Common myeloid progenitor, CD34-positive (primary cell): ENCODE measurements at regions of chr14 and their contacts with region 1.

Region 1: DNA sequence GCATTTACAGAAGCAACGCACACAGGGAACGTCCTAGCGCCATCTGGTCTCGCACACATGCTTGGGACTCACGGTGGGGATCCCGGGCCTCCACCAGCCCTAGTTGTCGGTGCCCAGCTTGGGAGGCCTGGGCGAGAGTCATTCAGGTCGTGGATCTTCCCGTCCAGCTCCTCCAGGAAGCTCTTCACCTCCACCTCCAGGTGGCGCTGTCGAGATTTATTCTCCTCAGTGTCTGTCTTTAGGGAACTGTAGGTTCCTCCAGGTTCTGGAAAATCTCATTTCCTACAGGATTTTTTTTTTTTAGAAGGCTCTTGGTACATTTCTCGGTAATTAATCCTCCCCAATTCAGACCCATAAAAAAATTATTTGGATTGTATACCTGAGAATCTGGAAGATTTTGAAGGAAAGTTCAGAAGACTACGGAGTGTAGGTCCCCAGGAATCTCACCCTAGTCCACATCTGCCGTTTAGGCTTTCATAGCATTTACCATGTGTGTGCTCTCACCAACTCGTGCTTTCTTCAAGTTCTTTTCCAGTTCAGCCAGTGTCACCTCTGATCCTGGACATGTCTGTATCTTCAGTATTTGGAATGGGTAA is 910.0 kb downstream of the TMEM121 start:
- DNase-seq: peak; percentile 31 to 64 (median 60)
- H3K4me3 ChIP-seq: no peak overlapping the region
- H3K27ac ChIP-seq: no peak overlapping the region
- H3K4me1 ChIP-seq: peaks cover 0 to 15% (median 5%) of the 10 kb centered on the region in 4 experiments
- H3K27me3 ChIP-seq: no peaks in the 10 kb centered on the region

Region 2: GRCh38 chr14:106459971-106460730 is 23.7 kb after region 1 on chr14:
- CTCF ChIA-PET with region 1: interaction called, 10 read pairs
- POLR2A ChIA-PET with region 1: no interaction called
- DNase-seq: no peak
- H3K4me3 ChIP-seq: no peak overlapping the region
- H3K27ac ChIP-seq: no peak overlapping the region
- H3K4me1 ChIP-seq: peaks cover 0 to 9% (median 3%) of the 10 kb centered on the region in 4 experiments
- H3K27me3 ChIP-seq: no peaks in the 10 kb centered on the region

Region 3: DNA sequence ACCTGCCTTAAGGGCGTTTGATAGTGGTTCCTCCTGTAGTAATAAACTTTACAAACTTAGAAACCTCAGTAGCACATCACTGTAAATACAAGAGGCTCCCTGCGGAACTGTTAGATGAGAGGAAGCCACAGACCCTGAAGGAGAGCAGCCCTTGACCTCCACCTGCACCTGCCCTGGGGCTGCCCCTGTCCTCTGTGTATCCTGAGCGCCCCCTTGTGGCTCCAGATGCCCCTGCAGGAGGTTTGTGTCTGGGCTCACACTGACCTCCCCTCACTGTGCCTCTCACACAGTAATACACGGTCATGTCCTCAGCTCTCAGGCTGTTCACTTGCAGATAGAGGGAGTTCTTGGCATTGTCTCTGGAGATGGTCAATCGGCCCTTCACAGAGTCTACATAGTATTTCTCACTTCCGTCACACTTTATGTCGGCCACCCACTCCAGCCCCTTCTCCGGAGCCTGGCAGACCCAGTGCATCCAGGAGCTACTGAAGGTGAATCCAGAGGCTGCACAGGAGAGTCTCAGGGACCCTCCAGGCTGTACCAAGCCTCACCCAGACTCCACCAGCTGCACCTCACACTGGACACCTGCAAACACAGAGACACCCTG is 149.8 kb after region 1 on chr14:
- CTCF ChIA-PET with region 1: no interaction called
- POLR2A ChIA-PET with region 1: no interaction called
- DNase-seq: peak; percentile 35 to 63 (median 53)
- H3K4me3 ChIP-seq: no peak overlapping the region
- H3K27ac ChIP-seq: no peak overlapping the region
- H3K4me1 ChIP-seq: peaks cover 0 to 19% (median 10%) of the 10 kb centered on the region in 4 experiments
- H3K27me3 ChIP-seq: peaks cover 0 to 2% (median 0%) of the 10 kb centered on the region in 5 experiments

Region 4: GRCh38 chr14:106631879-106632278 is 195.5 kb after region 1 on chr14:
- CTCF ChIA-PET with region 1: no interaction called
- POLR2A ChIA-PET with region 1: no interaction called
- DNase-seq: no peak
- H3K4me3 ChIP-seq: no peak overlapping the region
- H3K27ac ChIP-seq: no peak overlapping the region
- H3K4me1 ChIP-seq: peaks cover 0 to 8% (median 2%) of the 10 kb centered on the region in 4 experiments
- H3K27me3 ChIP-seq: no peaks in the 10 kb centered on the region

Region 5: GRCh38 chr14:106738075-106738474 is 301.7 kb after region 1 on chr14:
- CTCF ChIA-PET with region 1: no interaction called
- POLR2A ChIA-PET with region 1: no interaction called
- DNase-seq: peak in 1 of 3 donors; percentile 40
- H3K4me3 ChIP-seq: peak overlapping the region in 1 of 7 experiments; percentile 43
- H3K27ac ChIP-seq: no peak overlapping the region
- H3K4me1 ChIP-seq: peaks cover 0 to 3% (median 0%) of the 10 kb centered on the region in 4 experiments
- H3K27me3 ChIP-seq: no peaks in the 10 kb centered on the region